Endothelial cell of umbilical vein (primary cell): ENCODE measurements at regions of chr7 and their contacts with region 1.

Region 1: DNA sequence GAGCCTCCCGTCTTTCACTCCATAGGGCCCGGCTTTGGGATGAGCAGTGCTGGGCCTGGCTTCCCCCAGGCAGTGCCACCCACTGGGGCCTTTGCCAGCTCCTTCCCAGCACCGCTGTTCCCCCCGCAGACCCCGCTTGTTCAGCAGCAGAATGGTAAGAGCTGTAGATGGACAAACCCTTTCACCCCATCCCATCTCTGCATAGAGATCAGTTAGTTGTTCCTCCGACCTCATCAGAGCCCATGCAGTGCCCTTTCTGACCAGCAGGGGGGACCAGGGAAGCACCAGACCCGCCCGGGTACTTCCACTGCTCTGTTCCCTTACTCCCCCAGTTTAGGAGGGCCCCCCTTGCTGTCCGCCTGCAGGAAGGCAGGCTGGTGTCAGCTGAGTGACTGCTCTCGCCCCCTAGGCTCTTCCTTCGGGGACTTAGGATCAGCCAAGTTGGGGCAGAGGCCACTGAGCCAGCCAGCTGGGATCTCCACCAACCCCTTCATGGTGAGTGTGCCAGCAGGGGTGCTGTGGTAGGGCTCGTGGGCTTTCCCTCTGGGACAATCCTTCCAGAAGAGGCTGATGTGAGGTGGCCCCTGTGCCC is 9.8 kb downstream of the SAP25 start:
- DNase-seq: peak; percentile 53
- H3K4me3 ChIP-seq: no peak overlapping the region
- H3K27ac ChIP-seq: no peak overlapping the region
- H3K4me1 ChIP-seq: peaks cover 2% of the 10 kb centered on the region
- H3K27me3 ChIP-seq: no peaks in the 10 kb centered on the region
- CTCF ChIP-seq: peak; percentile 90 to 94
- POLR2A ChIP-seq: no peak

Region 2: DNA sequence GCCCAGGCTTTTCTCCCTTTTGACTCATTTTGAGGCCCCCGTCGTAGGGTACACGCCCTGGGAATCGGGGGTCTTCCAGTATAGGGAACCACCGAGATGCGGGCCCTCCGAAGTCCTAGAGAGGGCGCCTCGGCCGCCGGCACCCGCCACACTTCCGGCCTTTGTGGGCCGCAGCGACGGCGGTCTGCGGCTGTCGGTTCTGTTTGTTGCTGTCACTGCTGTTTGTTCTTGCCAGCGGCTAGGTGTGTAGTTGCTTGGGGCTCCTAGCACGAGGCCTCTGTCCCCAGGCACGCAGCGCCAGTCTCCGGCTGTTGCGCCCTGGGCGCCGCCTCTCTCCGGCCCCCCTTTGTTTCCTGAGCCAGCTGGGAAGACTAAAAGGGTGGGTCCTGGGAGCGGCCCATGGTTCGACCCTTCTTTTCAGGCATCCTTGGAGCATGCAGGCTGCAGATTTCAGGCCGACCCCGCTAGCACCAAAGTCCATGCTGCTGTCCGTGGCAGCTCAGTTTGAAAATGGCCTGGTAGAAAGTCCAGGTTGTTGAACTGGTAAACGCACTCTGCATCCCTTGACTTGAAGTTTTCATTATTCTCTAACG is 566.3 kb before region 1 on chr7:
- CTCF ChIA-PET with region 1: no interaction called
- POLR2A ChIA-PET with region 1: no interaction called
- dilution Hi-C with region 1: no loop called
- intact Hi-C with region 1: no loop called
- DNase-seq: peak; percentile 55
- H3K4me3 ChIP-seq: peak overlapping the region; percentile 6 to 53 (median 47)
- H3K27ac ChIP-seq: no peak overlapping the region
- H3K4me1 ChIP-seq: no peaks in the 10 kb centered on the region
- H3K27me3 ChIP-seq: no peaks in the 10 kb centered on the region
- CTCF ChIP-seq: peak in 1 of 2 donors; percentile 32
- POLR2A ChIP-seq: peak; percentile 79

Region 3: DNA sequence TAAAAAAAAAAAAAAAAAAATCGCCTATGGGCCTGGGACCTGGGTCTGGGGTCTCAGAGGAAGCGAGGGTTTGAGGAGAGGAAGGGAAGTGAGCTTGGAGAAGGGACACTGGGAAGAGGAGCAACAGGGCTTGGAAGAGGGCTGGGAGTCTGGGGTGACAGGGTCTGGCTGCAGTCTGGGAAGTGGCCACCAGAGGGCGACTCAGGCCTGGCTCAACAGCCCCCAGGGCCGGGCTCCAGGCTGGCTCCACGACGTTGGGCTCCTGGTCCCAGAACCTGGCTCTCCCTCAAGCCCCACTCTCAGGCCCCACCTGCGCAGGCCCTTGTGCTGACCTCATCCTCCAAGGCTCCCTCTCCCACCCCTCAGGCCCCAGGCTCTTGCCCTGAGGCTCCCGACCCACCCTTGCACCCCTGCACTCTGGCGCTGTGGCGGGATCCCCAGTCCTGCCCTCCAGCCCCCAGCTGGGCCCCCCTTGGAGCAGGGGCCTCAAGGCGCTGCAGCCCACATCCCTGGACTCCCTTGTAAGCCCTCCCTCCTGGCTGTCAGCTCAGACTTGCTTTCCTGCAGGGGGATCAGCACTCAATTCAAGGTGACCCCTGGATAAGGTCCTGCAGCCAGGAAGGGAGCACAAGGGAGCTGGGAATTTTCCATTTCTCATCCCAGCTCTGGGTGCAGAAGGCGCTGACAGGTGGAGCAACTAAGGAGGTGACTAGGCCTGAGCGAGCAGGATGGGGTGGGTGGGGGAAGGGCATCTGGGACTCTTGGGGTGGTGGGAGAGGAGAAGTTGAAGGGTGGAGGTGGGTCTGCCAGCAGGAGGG is 94.5 kb before region 1 on chr7:
- CTCF ChIA-PET with region 1: interaction called, 119 read pairs
- POLR2A ChIA-PET with region 1: interaction called, 3 read pairs
- dilution Hi-C with region 1: no loop called
- intact Hi-C with region 1: loop called (anchors 1 kb)
- DNase-seq: peak; percentile 66
- H3K4me3 ChIP-seq: no peak overlapping the region
- H3K27ac ChIP-seq: no peak overlapping the region
- H3K4me1 ChIP-seq: peaks cover 8% of the 10 kb centered on the region
- H3K27me3 ChIP-seq: no peaks in the 10 kb centered on the region
- CTCF ChIP-seq: peak; percentile 89 to 100
- POLR2A ChIP-seq: peak; percentile 52

Region 4: DNA sequence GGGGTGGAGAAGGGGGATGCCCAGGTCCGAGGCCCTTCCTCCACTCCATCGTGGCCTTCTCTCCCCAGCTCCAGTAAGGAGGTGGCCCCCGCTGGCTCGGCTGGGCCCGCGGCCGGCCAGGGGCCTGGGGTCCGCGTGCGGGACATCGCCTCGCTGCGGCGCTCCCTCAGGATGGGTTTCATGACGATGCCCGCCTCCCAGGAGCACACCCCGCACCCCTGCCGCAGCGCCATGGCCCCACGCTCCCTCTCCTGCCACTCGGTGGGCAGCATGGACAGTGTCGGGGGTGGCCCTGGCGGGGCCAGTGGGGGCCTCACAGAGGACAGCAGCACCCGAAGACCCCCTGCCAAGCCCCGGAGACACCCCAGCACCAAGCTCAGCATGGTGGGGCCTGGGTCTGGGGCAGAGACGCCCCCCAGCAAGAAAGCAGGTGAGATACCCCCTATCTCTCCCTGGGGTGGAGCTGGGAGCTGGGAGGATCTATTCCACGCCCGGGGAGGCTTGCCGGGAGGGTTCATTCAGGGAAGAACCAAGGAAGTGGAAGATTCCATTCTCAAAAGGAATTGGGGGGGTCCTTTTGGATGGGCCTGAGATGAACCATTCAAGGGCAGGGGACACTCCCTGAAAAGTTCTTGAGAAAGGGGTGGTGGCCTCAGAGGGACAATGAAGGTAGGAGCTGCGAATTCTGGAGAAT is 77.0 kb before region 1 on chr7:
- CTCF ChIA-PET with region 1: interaction called, 55 read pairs
- POLR2A ChIA-PET with region 1: no interaction called
- dilution Hi-C with region 1: no loop called
- intact Hi-C with region 1: loop called (anchors 1 kb)
- DNase-seq: no peak
- H3K4me3 ChIP-seq: no peak overlapping the region
- H3K27ac ChIP-seq: no peak overlapping the region
- H3K4me1 ChIP-seq: peaks cover 12% of the 10 kb centered on the region
- H3K27me3 ChIP-seq: no peaks in the 10 kb centered on the region
- CTCF ChIP-seq: no peak
- POLR2A ChIP-seq: no peak

Region 5: DNA sequence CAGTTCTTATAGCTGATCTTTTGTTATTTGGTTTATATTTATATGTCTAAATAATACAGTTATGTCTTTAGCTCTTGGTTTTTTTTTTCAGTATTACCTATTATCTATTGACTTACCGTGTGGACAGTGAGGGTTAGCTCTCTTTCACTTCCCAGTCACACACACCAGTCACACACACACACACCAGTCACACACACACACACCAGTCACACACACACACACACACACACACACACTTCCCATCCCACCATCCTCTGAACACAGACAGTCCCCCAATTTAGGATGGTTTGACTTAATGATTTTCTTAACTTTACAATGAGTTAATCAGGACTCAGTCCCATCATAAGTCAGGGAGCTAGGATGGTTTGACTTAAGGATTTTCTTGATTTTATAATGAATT is 43.8 kb before region 1 on chr7:
- CTCF ChIA-PET with region 1: interaction called, 11 read pairs
- POLR2A ChIA-PET with region 1: no interaction called
- dilution Hi-C with region 1: no loop called
- intact Hi-C with region 1: no loop called
- DNase-seq: no peak
- H3K4me3 ChIP-seq: no peak overlapping the region
- H3K27ac ChIP-seq: no peak overlapping the region
- H3K4me1 ChIP-seq: peaks cover 5% of the 10 kb centered on the region
- H3K27me3 ChIP-seq: no peaks in the 10 kb centered on the region
- CTCF ChIP-seq: no peak
- POLR2A ChIP-seq: no peak

Region 6: DNA sequence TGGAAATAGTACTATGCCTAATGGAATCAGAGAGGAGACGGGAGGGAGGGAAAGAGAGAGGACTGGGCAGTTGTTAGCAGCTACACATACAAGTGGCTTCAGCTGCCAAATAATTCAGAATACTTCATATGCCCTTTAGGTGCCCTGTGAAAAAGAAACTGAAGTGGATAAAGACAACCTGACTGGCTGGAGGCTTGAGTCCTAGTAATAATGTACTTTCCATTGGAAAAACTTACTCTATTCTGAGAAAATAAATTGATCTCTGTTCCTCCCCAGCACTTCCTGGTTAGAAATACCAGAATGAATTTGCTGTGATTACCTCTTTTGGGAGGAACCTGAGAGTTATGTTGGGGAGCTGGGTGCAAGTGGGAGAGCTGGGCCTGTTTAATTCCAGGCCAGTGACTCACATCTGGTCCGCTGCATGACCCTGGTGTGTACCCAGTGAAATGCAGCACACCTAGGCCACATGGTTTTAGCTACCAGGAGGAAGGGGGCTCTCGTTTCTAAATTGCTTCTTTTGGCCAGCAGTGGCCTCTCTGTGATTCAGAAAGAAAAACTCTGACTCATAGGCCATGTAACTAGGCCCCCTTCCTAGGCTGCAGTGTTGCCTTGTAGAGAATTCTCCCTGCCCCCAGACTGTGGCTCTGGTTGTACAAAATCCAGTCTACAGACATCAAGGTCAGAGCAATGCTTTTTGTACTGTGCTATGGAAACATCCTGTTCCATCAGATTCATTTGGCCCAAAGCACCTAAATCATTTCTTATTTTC is 18.4 kb before region 1 on chr7:
- CTCF ChIA-PET with region 1: interaction called, 35 read pairs
- POLR2A ChIA-PET with region 1: interaction called, 7 read pairs
- dilution Hi-C with region 1: no loop called
- intact Hi-C with region 1: no loop called
- DNase-seq: peak; percentile 92
- H3K4me3 ChIP-seq: peak overlapping the region in 1 of 3 experiments; percentile 2
- H3K27ac ChIP-seq: peak overlapping the region; percentile 94
- H3K4me1 ChIP-seq: peaks cover 52% of the 10 kb centered on the region
- H3K27me3 ChIP-seq: no peaks in the 10 kb centered on the region
- CTCF ChIP-seq: peak; percentile 9 to 21
- POLR2A ChIP-seq: peak; percentile 61

Region 7: DNA sequence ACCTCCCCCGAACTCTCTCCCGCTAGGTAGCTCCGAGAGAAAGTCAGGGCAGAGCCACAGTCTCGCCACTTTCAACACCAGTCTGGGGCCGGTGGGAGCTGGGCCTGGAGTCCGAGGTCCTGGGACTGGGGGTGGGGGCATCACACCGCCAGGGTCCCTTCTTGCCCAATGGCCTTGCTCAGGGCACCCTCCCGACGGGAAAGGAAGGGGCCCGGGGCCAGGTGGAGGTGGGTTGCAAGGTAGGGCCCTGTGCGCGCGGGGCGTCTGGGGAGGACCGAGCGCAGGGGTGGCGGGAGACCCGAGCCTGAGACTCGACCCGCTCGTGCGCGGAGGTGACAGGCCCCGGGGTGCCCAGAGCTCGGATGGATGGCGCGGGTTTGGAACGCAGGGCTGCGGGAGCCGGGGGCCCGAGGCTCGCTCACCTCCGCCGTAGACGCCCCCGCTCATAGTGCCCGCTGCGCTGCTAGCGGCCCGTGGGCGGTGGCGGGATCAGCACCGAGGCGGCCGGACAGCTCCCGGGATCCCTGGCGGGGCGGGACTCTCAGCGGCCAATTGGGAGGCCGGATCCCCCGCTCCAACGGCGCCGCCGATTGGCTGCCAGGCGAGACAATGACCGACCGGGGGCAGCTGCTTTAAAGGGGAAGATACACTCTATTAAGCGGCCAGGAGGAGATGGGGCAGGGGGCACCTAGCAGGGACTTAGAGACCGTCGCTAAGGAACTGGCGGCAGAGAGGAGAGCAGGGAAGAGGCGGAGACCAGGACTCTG is 92.2 kb after region 1 on chr7 and contains the start of gene ACTL6B:
- CTCF ChIA-PET with region 1: no interaction called
- POLR2A ChIA-PET with region 1: no interaction called
- dilution Hi-C with region 1: no loop called
- intact Hi-C with region 1: no loop called
- DNase-seq: peak; percentile 56
- H3K4me3 ChIP-seq: no peak within 1 kb of the TSS
- H3K27ac ChIP-seq: no peak within 1 kb of the TSS
- H3K4me1 ChIP-seq: no peaks in the 10 kb centered on the region
- H3K27me3 ChIP-seq: peaks cover 2 to 4% of the 10 kb centered on the region in 2 experiments
- CTCF ChIP-seq: no peak
- POLR2A ChIP-seq: no peak
- total RNA-seq, gene ACTL6B: not detected in 2 replicates

Region 8: GRCh38 chr7:100726996-100727761 is 163.3 kb after region 1 on chr7:
- CTCF ChIA-PET with region 1: interaction called, 16 read pairs
- POLR2A ChIA-PET with region 1: no interaction called
- dilution Hi-C with region 1: no loop called
- intact Hi-C with region 1: no loop called
- DNase-seq: no peak
- H3K4me3 ChIP-seq: no peak overlapping the region
- H3K27ac ChIP-seq: no peak overlapping the region
- H3K4me1 ChIP-seq: no peaks in the 10 kb centered on the region
- H3K27me3 ChIP-seq: peaks cover 4 to 11% of the 10 kb centered on the region in 2 experiments
- CTCF ChIP-seq: no peak
- POLR2A ChIP-seq: no peak

Region 9: DNA sequence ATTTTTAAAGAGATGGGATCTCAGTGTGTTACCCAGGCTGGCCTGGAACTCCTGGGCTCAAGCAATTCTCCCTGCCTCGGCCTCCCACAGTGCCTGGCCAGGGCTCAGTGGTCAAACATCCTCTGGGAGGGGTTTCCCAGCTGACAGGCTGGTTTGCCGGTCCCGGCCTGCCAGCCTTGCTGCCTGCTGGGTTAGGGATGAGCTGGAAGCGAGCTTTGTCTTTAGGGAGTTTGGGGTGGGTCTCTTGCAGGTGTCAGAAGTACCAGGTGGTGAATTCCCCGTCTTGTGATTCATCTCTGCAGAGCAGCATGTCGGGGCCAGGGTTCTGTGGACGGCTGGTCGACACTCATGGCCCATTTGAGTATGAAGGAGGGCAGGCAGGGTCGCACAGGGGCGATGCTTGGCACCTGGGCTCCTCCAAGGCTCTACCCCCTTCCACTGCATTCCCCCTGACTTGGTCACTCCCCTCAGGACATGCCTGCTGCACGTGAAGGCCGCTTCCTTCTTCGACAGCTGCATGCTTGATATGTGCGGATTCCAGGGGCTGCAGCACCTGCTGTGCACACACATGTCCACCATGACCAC is 199.7 kb after region 1 on chr7:
- CTCF ChIA-PET with region 1: no interaction called
- POLR2A ChIA-PET with region 1: no interaction called
- dilution Hi-C with region 1: no loop called
- intact Hi-C with region 1: no loop called
- DNase-seq: no peak
- H3K4me3 ChIP-seq: no peak overlapping the region
- H3K27ac ChIP-seq: no peak overlapping the region
- H3K4me1 ChIP-seq: no peaks in the 10 kb centered on the region
- H3K27me3 ChIP-seq: peaks cover 0 to 2% of the 10 kb centered on the region in 2 experiments
- CTCF ChIP-seq: no peak
- POLR2A ChIP-seq: no peak